Activated naive CD8-positive, alpha-beta T cell treated with anti-CD3 and anti-CD28 coated beads, Interleukin-2, amount 10 ng/mL, durations not matched to agents 7 days and 5 days (primary cell): ENCODE measurements at regions of chr1 and their contacts with region 1.

Region 1: GRCh38 chr1:229558571-229559335 is at the start of gene ABCB10:
- DNase-seq: peak; percentile 91
- ATAC-seq: peak; percentile 83
- H3K4me3 Mint-ChIP-seq: peak within 1 kb of the TSS; percentile 90
- H3K27ac Mint-ChIP-seq: peak within 1 kb of the TSS; percentile 88
- H3K4me1 Mint-ChIP-seq: peaks cover 34% of the 10 kb centered on the region
- H3K27me3 Mint-ChIP-seq: no peaks in the 10 kb centered on the region
- total RNA-seq, gene ABCB10: 26.5 to 29.8 TPM

Region 2: GRCh38 chr1:229625915-229626831 is 67.4 kb after region 1 on chr1 and contains the starts of genes TAF5L and URB2:
- POLR2A ChIA-PET with region 1: interaction called, 37 read pairs
- DNase-seq: peak; percentile 91
- ATAC-seq: peak; percentile 94
- H3K4me3 Mint-ChIP-seq: peak within 1 kb of the TSS; percentile 99
- H3K27ac Mint-ChIP-seq: peak within 1 kb of the TSS; percentile 97
- H3K4me1 Mint-ChIP-seq: peaks cover 40% of the 10 kb centered on the region
- H3K27me3 Mint-ChIP-seq: no peaks in the 10 kb centered on the region
- total RNA-seq, gene TAF5L: 23.4 to 24.6 TPM
- total RNA-seq, gene URB2: 10.6 to 10.9 TPM

Region 3: DNA sequence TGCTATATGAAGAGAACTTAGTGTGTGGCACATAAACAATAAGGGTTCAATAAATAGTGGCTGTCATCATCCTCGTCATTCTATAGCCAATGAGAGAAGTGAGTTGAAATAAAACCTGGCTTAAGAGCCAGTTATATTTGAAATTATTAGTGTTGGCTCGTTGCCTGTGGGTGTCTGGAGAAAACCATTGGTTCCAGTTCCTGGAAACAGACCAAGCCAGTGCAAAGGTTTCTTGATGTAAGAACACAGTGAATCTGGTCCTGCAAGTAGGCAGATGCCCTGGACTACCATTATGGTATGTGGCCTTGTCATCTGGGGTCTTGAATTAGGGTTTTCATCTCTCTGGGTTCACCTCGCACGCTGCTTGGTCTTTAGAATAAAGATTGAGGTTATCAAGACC is 110.6 kb after region 1 on chr1:
- POLR2A ChIA-PET with region 1: no interaction called
- DNase-seq: no peak
- ATAC-seq: no peak
- H3K4me3 Mint-ChIP-seq: no peak overlapping the region
- H3K27ac Mint-ChIP-seq: no peak overlapping the region
- H3K4me1 Mint-ChIP-seq: peaks cover 6% of the 10 kb centered on the region
- H3K27me3 Mint-ChIP-seq: no peaks in the 10 kb centered on the region